ENCODE measurements at regions of chr17 and their contacts with region 1.

Region 1: DNA sequence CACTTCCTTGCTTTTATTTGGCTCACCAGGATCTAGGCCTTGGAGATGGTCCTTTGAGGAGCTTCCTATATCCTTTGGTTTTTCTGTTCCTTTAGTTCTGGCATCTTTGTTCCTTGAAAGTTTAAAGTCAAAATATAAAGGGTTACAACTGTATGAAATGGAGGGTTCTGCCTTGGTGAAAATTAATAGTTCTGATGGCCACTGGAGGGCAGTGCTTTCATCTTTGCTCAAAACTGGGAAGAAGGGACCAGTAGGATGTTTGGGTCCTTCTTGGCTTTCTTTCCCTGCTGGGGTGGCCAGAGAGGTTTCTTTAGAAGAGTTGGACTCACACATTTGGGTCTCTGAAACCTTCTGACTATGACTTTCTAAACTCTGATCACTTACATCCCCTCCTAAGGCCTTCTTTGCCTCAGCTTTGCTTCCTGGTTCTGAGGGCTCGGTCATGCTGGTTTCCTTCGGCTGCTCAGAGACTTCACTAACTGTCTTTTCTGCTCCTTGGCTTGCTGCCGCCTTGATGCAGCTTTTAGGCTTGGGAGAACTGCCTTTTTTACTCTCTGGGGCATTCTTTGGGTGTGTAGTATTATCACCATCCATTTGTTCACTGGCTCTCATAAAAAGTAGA is 10.9 kb upstream of the ITGA2B start:
- DNase-seq: no peak
- ATAC-seq: peak; percentile 48 to 78 (median 60)
- H3K4me3 ChIP-seq: no peak overlapping the region
- H3K27ac ChIP-seq: no peak overlapping the region
- H3K4me1 ChIP-seq: no peaks in the 10 kb centered on the region
- H3K27me3 ChIP-seq: no peaks in the 10 kb centered on the region
- CTCF ChIP-seq: peak; percentile 51

Region 2: GRCh38 chr17:44522883-44523671 is 122.7 kb after region 1 on chr17:
- intact Hi-C with region 1: loop called (anchors 1 to 2 kb)
- DNase-seq: peak; percentile 67 to 90
- ATAC-seq: peak; percentile 90 to 100 (median 98)
- H3K4me3 ChIP-seq: no peak overlapping the region
- H3K27ac ChIP-seq: no peak overlapping the region
- H3K4me1 ChIP-seq: no peaks in the 10 kb centered on the region
- H3K27me3 ChIP-seq: peaks cover 0 to 2% (median 0%) of the 10 kb centered on the region in 3 donors
- CTCF ChIP-seq: peak; percentile 75

Measured in psoas muscle (tissue), 8 donors.